Aorta (tissue), 5 donors: ENCODE measurements at regions of chr9 and their contacts with region 1.

Region 1: DNA sequence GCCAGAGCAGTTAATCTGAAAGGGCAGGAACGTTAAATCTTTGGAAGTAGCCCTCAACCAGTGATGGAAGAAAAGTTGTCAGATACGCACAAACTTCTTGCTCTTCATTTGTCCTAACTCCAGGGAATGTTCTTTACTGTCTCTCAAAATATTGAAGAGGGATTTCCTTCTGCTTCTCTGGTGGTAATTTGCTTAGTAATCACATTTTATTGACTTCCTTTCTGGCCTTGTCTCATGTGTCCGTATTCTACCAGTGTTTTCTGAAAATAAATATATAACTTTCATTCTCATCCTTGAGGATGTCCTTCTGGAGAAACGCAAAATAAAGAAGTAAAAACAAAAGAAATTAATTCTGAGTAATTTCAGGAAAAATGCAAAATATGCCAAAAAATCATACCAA is 282.1 kb downstream of the CYLC2 start:
- DNase-seq: no peak
- ATAC-seq: no peak
- H3K4me3 ChIP-seq: no peak overlapping the region
- H3K27ac ChIP-seq: no peak overlapping the region
- H3K4me1 ChIP-seq: no peaks in the 10 kb centered on the region
- H3K27me3 ChIP-seq: no peaks in the 10 kb centered on the region

Region 2: GRCh38 chr9:103139891-103140290 is 137.3 kb before region 1 on chr9:
- intact Hi-C with region 1: loop called in 1 of 2 experiments (anchors 10 kb)
- DNase-seq: no peak
- ATAC-seq: no peak
- H3K4me3 ChIP-seq: no peak overlapping the region
- H3K27ac ChIP-seq: no peak overlapping the region
- H3K4me1 ChIP-seq: no peaks in the 10 kb centered on the region
- H3K27me3 ChIP-seq: no peaks in the 10 kb centered on the region

Region 3: DNA sequence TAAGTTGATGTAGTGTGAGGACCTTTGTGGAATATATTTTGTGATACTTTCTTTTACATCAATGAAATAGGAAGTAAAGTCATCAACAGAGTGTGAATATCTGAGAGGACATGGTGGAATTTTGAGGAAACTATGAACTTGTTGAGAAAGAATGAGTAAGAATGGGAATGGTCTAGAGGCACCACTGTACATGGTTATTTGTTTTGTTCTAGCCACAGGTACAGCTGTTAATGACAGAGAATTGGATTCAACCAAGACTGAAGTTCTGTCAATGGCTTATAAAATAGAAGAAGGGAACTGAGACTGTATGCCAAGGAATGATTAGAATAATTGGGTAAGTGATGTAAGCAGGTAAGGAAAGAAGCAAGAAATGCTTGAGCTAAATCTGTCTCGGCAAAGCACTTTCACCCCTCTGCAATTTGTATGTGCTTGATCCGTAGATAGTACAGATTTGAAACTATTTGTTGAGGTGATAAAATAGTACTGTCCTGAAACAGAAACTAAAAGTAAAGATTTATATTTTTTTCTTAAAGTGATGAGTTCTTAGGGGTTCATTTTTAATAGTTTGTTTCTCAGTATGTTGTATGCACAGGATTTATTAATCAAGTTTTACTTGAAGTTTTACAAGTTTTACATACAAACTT is 348.0 kb after region 1 on chr9:
- intact Hi-C with region 1: no loop called
- DNase-seq: no peak
- ATAC-seq: no peak
- H3K4me3 ChIP-seq: no peak overlapping the region
- H3K27ac ChIP-seq: no peak overlapping the region
- H3K4me1 ChIP-seq: no peaks in the 10 kb centered on the region
- H3K27me3 ChIP-seq: peaks cover 0 to 1% of the 10 kb centered on the region in 2 donors